ENCODE measurements at regions of chr20 and their contacts with region 1.

Region 1: GRCh38 chr20:8049310-8049709 is 29.7 kb upstream of the TMX4 start:
- DNase-seq: no peak
- H3K4me3 ChIP-seq: no peak overlapping the region
- H3K27ac ChIP-seq: no peak overlapping the region
- H3K4me1 ChIP-seq: no peaks in the 10 kb centered on the region
- H3K27me3 ChIP-seq: no peaks in the 10 kb centered on the region
- CTCF ChIP-seq: no peak

Region 2: DNA sequence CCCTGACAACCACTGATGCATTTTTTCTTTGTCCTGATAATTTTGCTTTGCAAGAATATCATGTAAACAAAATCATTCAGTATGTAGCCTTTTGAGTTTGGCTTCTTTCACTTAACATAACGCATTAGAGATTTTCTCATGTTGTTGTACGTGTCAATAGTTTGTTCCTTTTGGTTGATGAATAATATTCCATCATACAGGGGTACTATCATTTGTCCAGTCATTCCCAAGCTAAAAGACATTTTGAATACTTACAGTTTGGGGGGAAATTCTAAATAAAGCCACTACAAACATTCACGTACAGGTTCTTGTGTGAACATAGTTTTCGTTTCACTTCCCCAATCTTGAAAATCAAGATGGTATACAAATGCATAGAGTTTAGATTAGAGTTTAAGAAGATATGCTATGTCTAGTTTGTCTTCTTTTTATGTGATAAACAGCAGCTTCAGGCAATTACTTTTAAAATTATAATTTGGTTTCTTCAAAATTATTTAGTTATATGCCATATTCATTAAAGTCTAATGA is 114.2 kb before region 1 on chr20:
- intact Hi-C with region 1: no loop called
- DNase-seq: no peak
- H3K4me3 ChIP-seq: no peak overlapping the region
- H3K27ac ChIP-seq: no peak overlapping the region
- H3K4me1 ChIP-seq: peaks cover 0 to 11% (median 1%) of the 10 kb centered on the region in 4 donors
- H3K27me3 ChIP-seq: no peaks in the 10 kb centered on the region
- CTCF ChIP-seq: no peak

Region 3: DNA sequence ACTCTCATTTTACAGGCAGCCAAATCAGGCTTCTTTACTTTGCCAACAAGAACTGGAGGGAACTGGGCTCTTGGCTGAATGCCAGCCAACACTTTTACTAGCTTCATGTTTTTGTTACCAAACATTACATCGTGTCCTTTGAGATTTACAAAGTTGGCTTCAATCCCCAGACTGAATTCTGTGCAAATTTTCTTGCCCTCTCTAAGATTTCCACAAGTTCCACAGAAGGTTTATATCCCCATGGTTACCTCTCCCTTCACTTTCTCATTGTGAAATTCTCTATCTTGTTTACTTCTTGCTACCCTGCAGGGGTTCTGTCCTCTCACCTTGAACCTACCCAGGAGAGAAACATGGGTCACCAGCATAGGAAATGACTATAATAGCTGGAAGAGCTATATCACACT is 45.1 kb after region 1 on chr20:
- intact Hi-C with region 1: no loop called
- DNase-seq: peak; percentile 80 to 81
- H3K4me3 ChIP-seq: no peak overlapping the region
- H3K27ac ChIP-seq: no peak overlapping the region
- H3K4me1 ChIP-seq: peaks cover 0 to 15% (median 12%) of the 10 kb centered on the region in 4 donors
- H3K27me3 ChIP-seq: no peaks in the 10 kb centered on the region
- CTCF ChIP-seq: no peak

Region 4: DNA sequence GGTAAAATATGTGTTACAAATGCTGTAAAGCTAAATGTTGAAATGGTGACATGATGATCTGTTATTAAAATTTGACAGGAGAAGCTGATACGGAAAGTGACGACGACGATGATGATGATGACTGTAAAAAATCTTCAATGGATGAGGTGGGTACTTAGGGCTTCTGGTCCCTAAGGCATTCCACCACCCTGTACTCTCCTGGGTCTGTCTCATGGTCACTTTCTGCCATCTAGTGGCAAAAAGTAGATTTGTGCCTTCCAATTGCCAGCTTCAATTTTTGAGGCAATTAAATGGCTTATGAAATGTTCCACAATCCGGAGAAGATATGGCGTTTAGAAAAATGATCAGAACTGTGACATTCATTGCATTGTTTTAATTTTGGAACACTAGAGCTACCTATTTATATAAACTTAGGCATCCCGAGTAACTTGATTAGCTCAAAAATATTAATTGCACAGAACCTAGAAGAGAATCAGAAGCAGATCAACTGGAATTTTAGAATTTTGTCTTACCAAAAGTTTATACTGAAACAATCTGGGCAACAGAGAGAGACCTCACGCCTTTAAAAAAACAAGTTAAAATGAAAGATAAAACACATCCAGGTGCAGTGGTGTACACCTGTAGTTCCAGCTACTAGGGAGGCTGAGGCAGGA is 673.1 kb after region 1 on chr20:
- intact Hi-C with region 1: loop called (anchors 5 kb)
- DNase-seq: no peak
- H3K4me3 ChIP-seq: no peak overlapping the region
- H3K27ac ChIP-seq: no peak overlapping the region
- H3K4me1 ChIP-seq: no peaks in the 10 kb centered on the region
- H3K27me3 ChIP-seq: no peaks in the 10 kb centered on the region
- CTCF ChIP-seq: peak; percentile 67 to 68

Measured in tibial artery (tissue), 4 donors.